ENCODE measurements at regions of chr7 and their contacts with region 1.

Region 1: DNA sequence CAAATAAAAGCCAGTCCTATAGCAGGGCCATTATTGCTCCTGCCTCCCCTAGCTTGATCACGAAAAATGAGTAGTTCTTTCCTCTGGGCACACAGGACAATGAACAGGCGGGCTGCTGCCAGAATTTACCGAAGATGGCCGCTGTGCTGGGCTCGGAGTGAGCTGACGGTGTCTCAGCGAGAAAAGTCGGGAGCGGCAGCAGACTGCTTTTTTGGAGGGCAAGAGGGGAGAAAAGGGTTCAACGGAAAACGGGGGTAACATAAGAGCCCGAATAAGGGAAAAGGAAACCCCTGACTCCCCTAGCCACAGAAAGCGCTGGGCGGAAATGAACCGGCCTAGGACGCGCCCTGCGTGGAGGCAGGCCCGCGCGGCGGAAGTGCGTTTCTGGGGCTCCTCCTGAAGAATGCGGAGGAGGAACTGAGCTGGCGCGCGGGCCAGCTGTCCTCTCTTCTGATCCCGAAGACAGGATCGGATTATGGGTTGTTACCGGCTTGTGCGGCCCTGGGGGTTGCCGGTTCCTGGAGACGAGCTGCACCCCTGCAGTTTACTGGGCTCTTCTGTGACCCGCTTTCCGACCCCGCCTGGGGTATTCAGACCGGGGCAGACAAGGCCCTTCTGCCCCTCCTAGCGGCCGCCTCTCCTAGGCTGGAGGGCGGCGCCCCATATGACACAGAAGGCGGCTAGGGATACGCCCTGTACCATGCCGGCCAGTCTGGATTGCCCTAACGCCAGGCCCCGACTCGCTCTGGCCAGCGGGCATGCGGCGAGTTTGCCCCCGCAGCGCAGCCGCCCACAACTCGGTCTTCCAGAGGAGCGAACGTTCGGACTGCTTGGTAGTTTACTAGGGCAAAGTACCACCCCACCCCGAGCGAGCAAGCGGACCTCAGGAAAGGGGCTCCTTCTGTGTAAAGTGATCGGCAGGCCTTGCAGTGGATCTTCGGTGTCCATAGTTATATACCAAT is 30.1 kb upstream of the KMT2E start:
- DNase-seq: peak; percentile 85 to 88
- H3K4me3 ChIP-seq: peak overlapping the region; percentile 53 to 70 (median 53)
- H3K27ac ChIP-seq: peak overlapping the region; percentile 97 to 98 (median 97)
- H3K4me1 ChIP-seq: peaks cover 36 to 48% of the 10 kb centered on the region in 2 donors
- H3K27me3 ChIP-seq: no peaks in the 10 kb centered on the region
- CTCF ChIP-seq: peak; percentile 14 to 60 (median 52)
- POLR2A ChIP-seq: peak; percentile 35 to 85

Region 2: GRCh38 chr7:104900525-104901239 is 83.2 kb before region 1 on chr7:
- intact Hi-C with region 1: no loop called
- DNase-seq: no peak
- H3K4me3 ChIP-seq: no peak overlapping the region
- H3K27ac ChIP-seq: no peak overlapping the region
- H3K4me1 ChIP-seq: peaks cover 0 to 5% of the 10 kb centered on the region in 2 donors
- H3K27me3 ChIP-seq: no peaks in the 10 kb centered on the region
- CTCF ChIP-seq: no peak
- POLR2A ChIP-seq: no peak

Region 3: DNA sequence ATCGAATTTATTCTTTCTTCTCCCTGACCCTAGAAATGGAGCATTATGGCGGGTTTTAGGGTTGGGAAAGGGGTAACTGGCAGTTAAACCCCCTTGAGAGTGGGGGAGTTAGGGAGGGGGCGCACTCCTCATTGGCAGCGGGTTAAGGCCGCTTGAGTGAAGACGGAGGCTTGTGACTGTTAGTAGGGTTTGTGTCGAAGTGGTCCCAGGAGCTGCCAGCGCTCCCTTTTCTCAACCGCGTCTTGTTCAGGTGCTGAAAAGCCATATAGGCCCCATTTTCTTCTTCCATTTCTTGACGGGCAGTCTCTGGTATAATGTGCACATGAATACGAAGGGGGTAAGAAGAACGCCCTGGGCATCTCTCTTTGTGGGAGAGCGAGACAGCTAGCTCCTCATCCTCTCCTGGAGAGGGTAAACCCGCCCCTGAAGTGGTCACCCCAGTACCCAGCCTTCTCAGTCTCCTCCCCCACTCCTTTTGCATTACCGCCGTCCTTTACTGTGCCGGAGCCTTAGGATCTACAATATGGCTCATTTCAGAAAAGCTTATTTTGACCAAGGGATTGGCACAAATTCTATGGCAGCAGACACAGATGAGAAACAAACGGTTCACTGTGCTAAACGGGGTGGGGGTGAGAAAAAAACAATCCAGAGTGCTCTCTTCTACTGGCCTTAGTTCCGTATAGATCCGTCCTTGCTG is 31.0 kb after region 1 on chr7:
- intact Hi-C with region 1: loop called (anchors 5 kb)
- DNase-seq: peak; percentile 43 to 50
- H3K4me3 ChIP-seq: peak overlapping the region; percentile 68 to 98 (median 90)
- H3K27ac ChIP-seq: peak overlapping the region; percentile 99 to 100 (median 100)
- H3K4me1 ChIP-seq: peaks cover 16 to 25% of the 10 kb centered on the region in 2 donors
- H3K27me3 ChIP-seq: no peaks in the 10 kb centered on the region
- CTCF ChIP-seq: no peak
- POLR2A ChIP-seq: peak in 1 of 2 donors; percentile 59

Region 4: GRCh38 chr7:105101864-105102263 is 118.0 kb after region 1 on chr7:
- intact Hi-C with region 1: loop called (anchors 10 kb)
- DNase-seq: no peak
- H3K4me3 ChIP-seq: no peak overlapping the region
- H3K27ac ChIP-seq: no peak overlapping the region
- H3K4me1 ChIP-seq: peaks cover 0 to 8% of the 10 kb centered on the region in 2 donors
- H3K27me3 ChIP-seq: no peaks in the 10 kb centered on the region
- CTCF ChIP-seq: no peak
- POLR2A ChIP-seq: no peak

Measured in thyroid gland (tissue), 4 donors.